Transverse colon (tissue), 4 donors: ENCODE measurements at regions of chr12 and their contacts with region 1.

Region 1: DNA sequence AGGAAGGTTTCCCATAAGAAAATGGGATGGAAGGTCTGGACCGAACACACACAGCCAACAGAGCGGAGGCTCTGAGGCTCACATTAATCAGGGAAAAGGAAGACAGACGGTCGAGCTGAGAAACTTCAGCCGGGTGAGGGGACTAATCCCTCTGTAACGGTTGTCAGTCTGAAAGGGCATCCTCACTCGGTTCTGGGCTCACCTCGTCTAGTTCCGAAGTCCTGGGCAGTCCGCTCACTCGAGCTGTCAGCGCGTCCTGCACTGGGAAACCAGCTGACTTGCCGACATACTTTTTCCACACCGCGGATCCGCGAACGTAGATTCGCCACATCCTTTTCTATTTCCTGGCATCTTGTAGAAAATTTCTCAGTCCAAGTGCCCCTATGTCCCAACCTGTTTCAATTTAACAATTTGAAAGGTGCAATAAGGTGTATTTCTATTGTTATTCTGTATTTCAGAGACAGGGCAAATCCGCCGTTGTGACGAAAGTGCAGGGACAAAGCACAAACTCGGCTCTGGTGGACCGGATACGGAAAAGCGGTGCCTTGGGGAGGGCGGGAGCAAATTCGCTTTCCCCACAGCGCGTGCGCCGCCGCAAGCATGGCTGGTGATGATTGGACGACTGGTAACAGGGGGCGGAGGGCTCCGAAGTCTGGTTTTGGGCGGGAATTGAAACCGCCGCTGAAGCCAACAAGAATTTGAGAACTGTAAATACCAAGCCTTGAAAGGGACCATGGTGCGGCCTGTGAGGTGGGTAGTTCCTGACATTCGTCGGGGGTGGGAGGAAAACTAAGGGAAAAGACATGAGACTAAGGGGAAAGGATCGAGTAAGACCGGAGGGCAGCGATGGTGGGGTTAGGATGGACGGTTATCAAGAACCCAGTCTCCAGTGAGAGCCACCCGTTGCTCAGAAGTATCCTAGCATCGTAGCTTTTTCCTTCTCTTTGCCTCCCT is at the start of gene RAD51AP1:
- DNase-seq: peak; percentile 95
- H3K4me3 ChIP-seq: peak within 1 kb of the TSS; percentile 52 to 92 (median 68)
- H3K27ac ChIP-seq: peak within 1 kb of the TSS; percentile 82 to 91 (median 85)
- H3K4me1 ChIP-seq: peaks cover 0 to 36% (median 14%) of the 10 kb centered on the region in 4 donors
- H3K27me3 ChIP-seq: no peaks in the 10 kb centered on the region
- CTCF ChIP-seq: no peak
- EP300 ChIP-seq: peak; percentile 21
- POLR2A ChIP-seq: peak; percentile 46
- total RNA-seq, gene RAD51AP1: 1.9 to 2.7 (median 2.4) TPM in 3 of 4 donors, not detected in the other

Region 2: DNA sequence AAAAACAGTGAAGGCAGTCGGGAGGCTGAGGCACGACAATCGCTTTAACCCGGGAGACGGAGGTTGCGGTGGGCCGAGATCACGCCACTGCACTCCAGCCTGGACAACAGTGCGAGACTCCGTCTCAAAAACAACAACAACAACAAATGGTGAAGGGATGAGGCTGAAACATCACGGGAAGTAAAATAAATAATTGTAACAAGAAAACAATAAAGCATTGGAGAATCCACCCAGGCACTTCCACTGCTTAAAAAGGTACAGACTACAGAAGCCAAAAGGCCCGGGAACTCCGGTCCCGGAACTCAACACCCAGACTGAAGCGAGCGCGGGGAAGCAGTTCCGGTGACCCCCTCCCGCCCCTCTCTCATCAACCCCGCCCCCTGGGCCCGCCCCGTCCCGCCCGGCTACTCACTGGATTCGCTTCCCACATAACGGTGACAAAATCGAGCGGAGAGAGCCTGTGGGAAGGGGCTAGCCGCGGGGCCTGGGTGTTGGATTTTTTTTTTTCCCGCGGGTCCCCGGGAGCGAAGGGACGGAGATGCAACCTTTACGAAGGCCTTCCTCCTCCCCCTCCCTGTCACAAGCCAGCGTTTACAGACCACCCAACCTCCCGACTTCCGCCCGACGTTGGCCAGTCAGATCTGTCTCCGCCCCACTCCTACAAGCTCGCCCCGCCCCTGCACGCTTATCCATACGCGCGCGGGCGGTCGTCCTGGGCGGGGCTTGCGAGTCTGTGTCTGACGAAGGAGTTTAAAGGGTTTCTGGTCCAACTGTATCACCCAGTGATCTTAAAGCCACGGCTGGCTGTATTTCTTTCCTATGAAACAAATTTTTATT is 665.5 kb before region 1 on chr12 and contains the start of gene PARP11:
- in situ Hi-C with region 1: loop called in 1 of 4 experiments (anchors 10 kb)
- intact Hi-C with region 1: no loop called
- DNase-seq: peak; percentile 98
- H3K4me3 ChIP-seq: peak within 1 kb of the TSS; percentile 58 to 78 (median 66)
- H3K27ac ChIP-seq: peak within 1 kb of the TSS; percentile 90 to 94 (median 92)
- H3K4me1 ChIP-seq: peaks cover 6 to 42% (median 26%) of the 10 kb centered on the region in 4 donors
- H3K27me3 ChIP-seq: no peaks in the 10 kb centered on the region
- CTCF ChIP-seq: no peak
- EP300 ChIP-seq: no peak
- POLR2A ChIP-seq: peak; percentile 63
- total RNA-seq, gene PARP11: 4.5 to 6.2 (median 5.0) TPM

Region 3: DNA sequence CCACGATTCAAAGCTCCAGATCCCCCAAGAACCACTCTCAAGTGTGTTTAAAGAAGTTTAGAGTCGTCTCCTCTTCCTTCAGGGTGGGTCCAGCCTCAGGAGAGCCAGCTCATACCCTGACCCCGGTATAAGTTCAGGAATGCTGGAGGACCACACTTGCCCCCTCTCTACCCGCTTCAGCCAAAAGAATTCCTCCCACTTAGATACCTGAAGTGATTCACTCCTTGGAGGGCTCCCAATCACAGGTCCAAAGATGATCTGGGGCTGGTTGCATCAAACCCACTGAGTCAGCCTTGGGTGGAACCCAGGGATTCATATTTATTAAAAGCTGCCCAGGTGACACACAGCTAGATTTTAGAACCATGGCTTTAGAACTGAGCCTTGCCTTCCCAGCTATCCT is 531.7 kb before region 1 on chr12:
- in situ Hi-C with region 1: no loop called
- intact Hi-C with region 1: no loop called
- DNase-seq: no peak
- H3K4me3 ChIP-seq: no peak overlapping the region
- H3K27ac ChIP-seq: no peak overlapping the region
- H3K4me1 ChIP-seq: no peaks in the 10 kb centered on the region
- H3K27me3 ChIP-seq: no peaks in the 10 kb centered on the region
- CTCF ChIP-seq: no peak
- EP300 ChIP-seq: no peak
- POLR2A ChIP-seq: no peak

Region 4: GRCh38 chr12:4320853-4321701 is 217.4 kb before region 1 on chr12 and contains the start of gene TIGAR:
- in situ Hi-C with region 1: loop called in 2 of 4 experiments (anchors 25 kb)
- intact Hi-C with region 1: no loop called
- DNase-seq: peak; percentile 95
- H3K4me3 ChIP-seq: peak within 1 kb of the TSS; percentile 84 to 99 (median 90)
- H3K27ac ChIP-seq: peak within 1 kb of the TSS; percentile 91 to 97 (median 96)
- H3K4me1 ChIP-seq: peaks cover 7 to 27% (median 17%) of the 10 kb centered on the region in 4 donors
- H3K27me3 ChIP-seq: no peaks in the 10 kb centered on the region
- CTCF ChIP-seq: no peak
- EP300 ChIP-seq: no peak
- POLR2A ChIP-seq: peak; percentile 94
- total RNA-seq, gene TIGAR: 2.6 to 26.6 (median 4.4) TPM